Endothelial cell of umbilical vein (primary cell): ENCODE measurements at regions of chr15 and their contacts with region 1.

Region 1: DNA sequence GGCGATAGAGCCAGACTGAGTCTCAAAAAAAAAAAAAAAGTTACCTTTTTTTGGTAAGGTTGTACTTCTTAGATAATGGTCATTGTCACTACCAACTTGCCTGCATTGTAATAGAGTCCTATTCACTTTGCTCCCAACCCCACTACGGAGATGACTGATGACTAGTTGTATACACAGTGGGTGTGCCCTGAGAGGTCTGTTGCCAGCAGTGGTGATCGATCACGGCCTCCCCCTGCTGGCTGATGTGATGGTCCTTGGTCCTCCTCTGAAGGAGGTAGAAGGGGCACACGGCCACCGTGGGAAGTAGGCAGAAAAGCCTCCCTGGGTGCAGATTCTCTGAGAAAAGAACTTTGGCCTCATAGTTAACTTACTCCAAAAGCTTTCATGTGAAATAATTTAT is 10.7 kb downstream of the GCNT3 start:
- DNase-seq: peak; percentile 55
- H3K4me3 ChIP-seq: no peak overlapping the region
- H3K27ac ChIP-seq: no peak overlapping the region
- H3K4me1 ChIP-seq: no peaks in the 10 kb centered on the region
- H3K27me3 ChIP-seq: peaks cover 15 to 17% of the 10 kb centered on the region in 2 experiments
- CTCF ChIP-seq: peak; percentile 29 to 64
- POLR2A ChIP-seq: no peak

Region 2: DNA sequence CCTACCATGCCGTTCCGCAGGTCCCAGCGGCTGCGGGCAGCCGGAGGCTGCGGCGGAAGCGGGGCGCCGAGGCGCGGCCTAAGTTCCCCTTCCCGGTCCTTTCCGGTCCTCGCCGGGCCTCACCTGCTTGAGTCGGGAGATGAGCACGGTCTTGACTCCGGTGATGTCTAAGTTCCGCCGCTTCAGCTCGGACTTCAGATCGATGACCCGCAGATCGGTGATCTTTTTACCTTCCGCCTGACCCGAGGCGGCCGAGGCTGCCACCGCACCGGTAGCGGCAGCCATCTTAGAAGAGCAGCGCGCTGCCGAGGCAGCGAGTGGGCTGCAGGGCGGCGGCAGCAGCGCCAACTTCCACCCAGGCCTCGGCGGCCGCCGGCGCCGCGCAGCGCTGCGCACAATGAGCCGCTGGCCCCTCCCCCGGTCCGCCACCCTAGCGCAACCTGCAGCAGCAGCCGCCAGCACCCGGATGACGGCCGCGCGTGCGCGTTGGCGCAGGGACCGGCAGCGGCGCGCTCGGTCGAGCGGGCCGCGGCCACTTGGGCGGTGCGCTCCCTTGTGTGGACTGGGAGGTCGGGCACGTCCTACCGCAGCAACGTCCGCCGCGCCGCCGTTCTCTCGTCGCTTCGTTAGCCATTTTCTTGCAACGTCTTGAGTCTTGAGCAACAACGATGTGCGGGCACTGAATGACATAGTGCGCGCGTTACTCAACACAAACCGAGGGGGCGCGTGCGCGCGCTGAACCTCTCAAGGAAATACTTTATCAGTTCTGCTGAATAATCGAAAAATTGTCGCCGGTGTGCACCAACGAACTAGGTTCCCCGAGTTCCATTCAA is 688.8 kb before region 1 on chr15 and contains the start of gene SLTM:
- CTCF ChIA-PET with region 1: no interaction called
- POLR2A ChIA-PET with region 1: interaction called, 10 read pairs
- dilution Hi-C with region 1: no loop called
- intact Hi-C with region 1: no loop called
- DNase-seq: peak; percentile 97
- H3K4me3 ChIP-seq: peak within 1 kb of the TSS; percentile 54 to 97 (median 95)
- H3K27ac ChIP-seq: peak within 1 kb of the TSS; percentile 93
- H3K4me1 ChIP-seq: peaks cover 19% of the 10 kb centered on the region
- H3K27me3 ChIP-seq: no peaks in the 10 kb centered on the region
- CTCF ChIP-seq: peak in 1 of 2 donors; percentile 31
- POLR2A ChIP-seq: peak; percentile 99
- total RNA-seq, gene SLTM: 80.9 and 93.0 TPM in 2 replicates

Region 3: GRCh38 chr15:59656897-59657634 is 34.8 kb after region 1 on chr15 and contains the start of gene GTF2A2:
- CTCF ChIA-PET with region 1: no interaction called
- POLR2A ChIA-PET with region 1: no interaction called
- dilution Hi-C with region 1: no loop called
- intact Hi-C with region 1: loop called (anchors 2 kb)
- DNase-seq: peak; percentile 95
- H3K4me3 ChIP-seq: peak within 1 kb of the TSS; percentile 52 to 98 (median 90)
- H3K27ac ChIP-seq: peak within 1 kb of the TSS; percentile 57
- H3K4me1 ChIP-seq: peaks cover 14% of the 10 kb centered on the region
- H3K27me3 ChIP-seq: no peaks in the 10 kb centered on the region
- CTCF ChIP-seq: no peak
- POLR2A ChIP-seq: peak; percentile 96
- total RNA-seq, gene GTF2A2: 128 and 139 TPM in 2 replicates